Gastrocnemius medialis (tissue), 4 donors: ENCODE measurements at regions of chr17 and their contacts with region 1.

Region 1: DNA sequence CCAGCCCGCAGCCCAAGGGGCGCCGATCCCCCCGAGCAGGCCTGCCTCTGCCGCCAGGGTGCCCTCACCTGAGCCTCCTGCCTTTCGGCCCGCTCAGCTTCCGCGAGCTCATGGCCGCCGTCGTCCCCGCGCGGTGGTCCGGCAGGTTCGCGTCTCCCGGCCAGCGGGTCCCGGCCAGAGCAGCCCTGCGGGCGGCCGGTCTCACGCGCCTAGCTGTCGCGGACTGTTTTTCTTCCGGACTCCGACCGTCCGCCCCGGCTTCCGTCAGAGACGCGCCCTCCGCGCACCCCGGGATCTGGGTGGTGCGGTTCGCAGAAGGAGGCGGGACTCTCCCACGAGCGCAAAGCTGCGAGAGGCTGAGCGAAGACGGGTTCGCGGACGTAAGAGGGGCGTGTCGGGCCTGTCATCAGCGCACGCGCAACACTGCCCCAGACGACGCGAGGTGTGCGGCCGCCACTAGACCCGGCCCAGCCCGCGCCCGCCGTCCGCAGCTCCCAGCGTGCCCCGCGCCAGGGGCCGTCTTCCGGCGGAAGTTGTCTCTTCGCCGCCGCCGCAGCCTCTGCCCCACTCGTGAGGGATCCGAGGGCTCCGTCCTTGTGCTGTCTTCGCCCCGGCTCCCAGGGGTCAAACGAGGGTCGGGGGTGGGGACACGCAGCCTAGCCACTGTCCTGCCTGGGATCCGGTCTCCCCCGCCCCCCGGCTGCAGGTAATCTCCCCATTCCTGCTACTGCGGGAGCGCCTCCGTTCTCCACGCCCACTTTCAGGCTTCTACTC is at the start of gene INPP5K:
- DNase-seq: peak; percentile 98
- ATAC-seq: peak; percentile 88 to 89
- H3K4me3 ChIP-seq: peak within 1 kb of the TSS; percentile 81 to 98 (median 90)
- H3K27ac ChIP-seq: peak within 1 kb of the TSS; percentile 91 to 99 (median 98)
- H3K4me1 ChIP-seq: peaks cover 52 to 55% of the 10 kb centered on the region in 2 donors
- H3K27me3 ChIP-seq: no peaks in the 10 kb centered on the region
- CTCF ChIP-seq: peak in 1 of 5 experiments; percentile 28
- POLR2A ChIP-seq: peak; percentile 84 to 92
- total RNA-seq, gene INPP5K: 102 to 196 (median 114) TPM

Region 2: GRCh38 chr17:1267471-1267947 is 249.1 kb before region 1 on chr17:
- in situ Hi-C with region 1: loop called in 3 of 4 experiments (anchors 10 to 25 kb)
- intact Hi-C with region 1: loop called (anchors 5 kb)
- DNase-seq: peak; percentile 14 to 42
- ATAC-seq: peak; percentile 29 to 58
- H3K4me3 ChIP-seq: peak overlapping the region; percentile 66 to 82 (median 81)
- H3K27ac ChIP-seq: peak overlapping the region; percentile 82 to 85 (median 84)
- H3K4me1 ChIP-seq: peaks cover 0 to 6% of the 10 kb centered on the region in 2 donors
- H3K27me3 ChIP-seq: peaks cover 12 to 20% (median 16%) of the 10 kb centered on the region in 3 donors
- CTCF ChIP-seq: no peak
- POLR2A ChIP-seq: no peak

Region 3: GRCh38 chr17:1351971-1352370 is 164.6 kb before region 1 on chr17:
- in situ Hi-C with region 1: loop called in 2 of 4 experiments (anchors 10 to 25 kb)
- intact Hi-C with region 1: no loop called
- DNase-seq: no peak
- ATAC-seq: no peak
- H3K4me3 ChIP-seq: no peak overlapping the region
- H3K27ac ChIP-seq: peak overlapping the region; percentile 42 to 78 (median 68)
- H3K4me1 ChIP-seq: peaks cover 27 to 33% of the 10 kb centered on the region in 2 donors
- H3K27me3 ChIP-seq: no peaks in the 10 kb centered on the region
- CTCF ChIP-seq: no peak
- POLR2A ChIP-seq: no peak

Region 4: GRCh38 chr17:1455797-1456599 is 60.6 kb before region 1 on chr17 and contains the start of gene CRK:
- in situ Hi-C with region 1: loop called in 1 of 4 experiments (anchors 10 kb)
- intact Hi-C with region 1: loop called (anchors 1 kb)
- DNase-seq: peak; percentile 94
- ATAC-seq: peak; percentile 74 to 75
- H3K4me3 ChIP-seq: peak within 1 kb of the TSS; percentile 76 to 92 (median 84)
- H3K27ac ChIP-seq: peak within 1 kb of the TSS; percentile 94 to 99 (median 96)
- H3K4me1 ChIP-seq: peaks cover 47 to 52% of the 10 kb centered on the region in 2 donors
- H3K27me3 ChIP-seq: no peaks in the 10 kb centered on the region
- CTCF ChIP-seq: no peak
- POLR2A ChIP-seq: peak; percentile 100
- total RNA-seq, gene CRK: 48.6 to 64.6 (median 56.7) TPM

Region 5: GRCh38 chr17:1561400-1562175 is 45.0 kb after region 1 on chr17:
- in situ Hi-C with region 1: no loop called
- intact Hi-C with region 1: loop called (anchors 5 kb)
- DNase-seq: no peak
- ATAC-seq: peak; percentile 20 to 48
- H3K4me3 ChIP-seq: peak overlapping the region; percentile 64 to 79 (median 69)
- H3K27ac ChIP-seq: peak overlapping the region; percentile 80 to 90 (median 84)
- H3K4me1 ChIP-seq: peaks cover 12 to 27% of the 10 kb centered on the region in 2 donors
- H3K27me3 ChIP-seq: no peaks in the 10 kb centered on the region
- CTCF ChIP-seq: peak; percentile 20 to 37 (median 36)
- POLR2A ChIP-seq: no peak

Region 6: DNA sequence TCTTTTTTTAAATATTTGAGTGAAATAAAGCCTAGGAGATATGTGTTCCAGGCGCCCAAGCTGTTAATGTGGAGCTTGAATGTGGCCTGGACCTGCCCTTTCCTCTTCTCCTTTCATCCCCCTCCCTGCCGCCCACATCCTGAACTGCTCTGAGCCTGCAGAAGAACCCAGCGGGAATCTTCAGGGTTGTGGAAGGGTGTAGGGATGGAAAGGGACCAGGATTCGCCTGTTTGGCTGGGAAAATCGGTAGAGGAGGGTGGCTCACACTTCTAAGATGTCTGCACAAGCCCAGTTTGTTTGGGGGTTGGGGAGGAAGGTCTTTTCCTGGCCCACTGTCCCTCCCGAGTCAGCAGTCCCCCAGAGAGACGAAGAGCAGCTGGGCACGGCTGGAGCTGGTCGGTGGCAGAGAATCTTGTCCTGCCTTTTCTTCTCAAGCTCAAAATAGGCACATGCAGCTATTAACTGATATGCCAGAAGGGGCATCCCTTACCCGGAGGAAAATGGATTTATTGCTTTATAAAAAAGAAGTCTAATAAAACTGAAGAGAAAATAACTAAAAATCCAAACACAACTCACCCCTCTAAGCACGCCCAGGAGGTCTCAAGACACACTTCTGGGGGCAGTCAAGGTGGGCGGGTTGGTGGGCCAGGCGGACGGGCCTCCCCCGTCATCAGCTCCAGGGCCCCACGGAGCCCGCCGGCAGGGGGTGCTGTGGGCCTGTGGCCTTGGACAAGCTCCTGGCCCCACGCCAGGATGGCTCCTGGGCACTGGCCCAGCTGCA is 57.5 kb after region 1 on chr17:
- in situ Hi-C with region 1: no loop called
- intact Hi-C with region 1: no loop called
- DNase-seq: peak; percentile 59 to 74
- ATAC-seq: peak; percentile 46 to 54
- H3K4me3 ChIP-seq: no peak overlapping the region
- H3K27ac ChIP-seq: peak overlapping the region; percentile 90 to 97 (median 95)
- H3K4me1 ChIP-seq: peaks cover 40 to 44% of the 10 kb centered on the region in 2 donors
- H3K27me3 ChIP-seq: no peaks in the 10 kb centered on the region
- CTCF ChIP-seq: peak; percentile 97 to 99 (median 99)
- POLR2A ChIP-seq: no peak